Activated T-helper 1 cell treated with anti-CD3 and anti-CD28 coated beads, Interleukin-12 subunit alpha, Interleukin-12 subunit beta, Interleukin-2, Interleukin-4 antibody, amounts not matched to agents 30 ng/mL and 10 ng/mL and 1 ng/mL, durations not matched to agents 14 hours and 24 hours and 36 hours (primary cell): ENCODE measurements at regions of chr1 and their contacts with region 1.

Region 1: GRCh38 chr1:179882243-179883039 is at the start of gene TOR1AIP1:
- DNase-seq: peak; percentile 98
- H3K4me3 Mint-ChIP-seq: peak within 1 kb of the TSS; percentile 95
- H3K27ac Mint-ChIP-seq: peak within 1 kb of the TSS; percentile 100
- H3K4me1 Mint-ChIP-seq: peaks cover 55% of the 10 kb centered on the region
- H3K27me3 Mint-ChIP-seq: no peaks in the 10 kb centered on the region
- total RNA-seq, gene TOR1AIP1: 76.1 and 80.5 TPM in 2 replicates

Region 2: DNA sequence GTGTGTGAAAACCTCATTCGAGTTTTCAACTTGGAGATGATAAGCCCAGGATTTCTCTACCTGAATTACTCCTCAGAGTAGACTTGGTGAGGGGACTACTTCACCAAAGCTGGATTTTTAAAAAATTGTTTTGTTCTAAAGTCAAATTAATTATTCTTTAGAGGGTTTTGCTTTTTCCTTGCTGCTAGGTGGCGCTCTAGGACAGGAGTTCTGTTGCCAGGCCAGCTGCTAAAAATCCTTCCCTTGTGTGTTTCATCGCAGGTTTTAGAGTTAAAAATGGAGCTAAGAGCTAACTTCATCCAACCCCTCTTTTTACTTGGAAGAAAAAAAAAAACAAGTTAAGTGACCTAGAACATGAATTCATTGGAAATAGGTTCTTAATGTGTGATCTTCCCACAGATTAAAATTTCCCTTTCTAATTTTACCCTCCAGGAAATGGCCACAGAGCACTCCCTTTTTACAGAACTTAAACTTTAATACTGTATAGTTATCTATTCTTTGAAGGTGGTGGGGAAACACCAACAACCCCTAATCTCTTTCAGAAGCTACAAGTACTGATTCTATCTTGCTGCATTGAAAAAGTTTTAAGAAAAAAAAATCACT is 176.0 kb before region 1 on chr1:
- intact Hi-C with region 1: loop called (anchors 2 kb)
- DNase-seq: peak; percentile 47
- H3K4me3 Mint-ChIP-seq: no peak overlapping the region
- H3K27ac Mint-ChIP-seq: no peak overlapping the region
- H3K4me1 Mint-ChIP-seq: peaks cover 25% of the 10 kb centered on the region
- H3K27me3 Mint-ChIP-seq: peaks cover 3% of the 10 kb centered on the region

Region 3: GRCh38 chr1:179926494-179927205 is 44.2 kb after region 1 on chr1:
- intact Hi-C with region 1: no loop called
- DNase-seq: no peak
- H3K4me3 Mint-ChIP-seq: no peak overlapping the region
- H3K27ac Mint-ChIP-seq: no peak overlapping the region
- H3K4me1 Mint-ChIP-seq: no peaks in the 10 kb centered on the region
- H3K27me3 Mint-ChIP-seq: peaks cover 10% of the 10 kb centered on the region

Region 4: DNA sequence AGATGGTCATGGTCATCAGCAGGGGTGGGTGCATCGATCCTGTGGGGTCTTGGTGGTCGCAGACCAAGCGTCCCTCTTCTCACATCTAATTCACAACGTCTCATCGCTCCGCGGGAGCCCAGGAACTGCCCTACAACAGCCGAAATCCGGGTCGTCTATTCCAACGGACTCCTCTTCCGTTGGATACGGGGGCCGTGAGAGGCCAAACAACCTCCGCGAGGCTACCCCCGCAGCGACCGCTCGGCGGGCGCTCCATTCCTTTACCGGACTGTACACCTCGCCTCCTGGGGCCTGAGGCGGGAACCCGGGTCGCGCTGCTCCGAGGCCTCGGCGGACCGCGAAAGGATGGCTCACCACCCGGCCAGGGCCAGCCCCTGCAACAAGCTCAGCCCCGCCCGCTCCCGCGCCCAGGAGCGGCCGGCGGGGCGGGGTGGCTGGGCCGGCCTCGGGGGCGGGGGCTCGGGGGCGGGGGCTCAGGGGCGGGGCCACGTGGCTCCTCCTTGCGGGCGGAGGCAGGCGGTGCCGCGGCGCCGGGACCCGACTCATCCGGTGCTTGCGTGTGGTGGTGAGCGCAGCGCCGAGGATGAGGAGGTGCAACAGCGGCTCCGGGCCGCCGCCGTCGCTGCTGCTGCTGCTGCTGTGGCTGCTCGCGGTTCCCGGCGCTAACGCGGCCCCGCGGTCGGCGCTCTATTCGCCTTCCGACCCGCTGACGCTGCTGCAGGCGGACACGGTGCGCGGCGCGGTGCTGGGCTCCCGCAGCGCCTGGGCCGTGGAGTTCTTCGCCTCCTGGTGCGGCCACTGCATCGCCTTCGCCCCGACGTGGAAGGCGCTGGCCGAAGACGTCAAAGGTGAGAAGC is 272.1 kb after region 1 on chr1 and contains the start of gene QSOX1:
- intact Hi-C with region 1: loop called (anchors 1 kb)
- DNase-seq: peak; percentile 85
- H3K4me3 Mint-ChIP-seq: peak within 1 kb of the TSS; percentile 88
- H3K27ac Mint-ChIP-seq: peak within 1 kb of the TSS; percentile 94
- H3K4me1 Mint-ChIP-seq: peaks cover 44% of the 10 kb centered on the region
- H3K27me3 Mint-ChIP-seq: peaks cover 4% of the 10 kb centered on the region
- total RNA-seq, gene QSOX1: 61.4 and 63.7 TPM in 2 replicates

Region 5: GRCh38 chr1:181021811-181022434 is 1139.5 kb after region 1 on chr1:
- intact Hi-C with region 1: loop called (anchors 5 kb)
- DNase-seq: peak; percentile 37
- H3K4me3 Mint-ChIP-seq: peak overlapping the region; percentile 96
- H3K27ac Mint-ChIP-seq: peak overlapping the region; percentile 97
- H3K4me1 Mint-ChIP-seq: peaks cover 46% of the 10 kb centered on the region
- H3K27me3 Mint-ChIP-seq: peaks cover 15% of the 10 kb centered on the region